B cell (primary cell): ENCODE measurements at regions of chr11 and their contacts with region 1.

Region 1: DNA sequence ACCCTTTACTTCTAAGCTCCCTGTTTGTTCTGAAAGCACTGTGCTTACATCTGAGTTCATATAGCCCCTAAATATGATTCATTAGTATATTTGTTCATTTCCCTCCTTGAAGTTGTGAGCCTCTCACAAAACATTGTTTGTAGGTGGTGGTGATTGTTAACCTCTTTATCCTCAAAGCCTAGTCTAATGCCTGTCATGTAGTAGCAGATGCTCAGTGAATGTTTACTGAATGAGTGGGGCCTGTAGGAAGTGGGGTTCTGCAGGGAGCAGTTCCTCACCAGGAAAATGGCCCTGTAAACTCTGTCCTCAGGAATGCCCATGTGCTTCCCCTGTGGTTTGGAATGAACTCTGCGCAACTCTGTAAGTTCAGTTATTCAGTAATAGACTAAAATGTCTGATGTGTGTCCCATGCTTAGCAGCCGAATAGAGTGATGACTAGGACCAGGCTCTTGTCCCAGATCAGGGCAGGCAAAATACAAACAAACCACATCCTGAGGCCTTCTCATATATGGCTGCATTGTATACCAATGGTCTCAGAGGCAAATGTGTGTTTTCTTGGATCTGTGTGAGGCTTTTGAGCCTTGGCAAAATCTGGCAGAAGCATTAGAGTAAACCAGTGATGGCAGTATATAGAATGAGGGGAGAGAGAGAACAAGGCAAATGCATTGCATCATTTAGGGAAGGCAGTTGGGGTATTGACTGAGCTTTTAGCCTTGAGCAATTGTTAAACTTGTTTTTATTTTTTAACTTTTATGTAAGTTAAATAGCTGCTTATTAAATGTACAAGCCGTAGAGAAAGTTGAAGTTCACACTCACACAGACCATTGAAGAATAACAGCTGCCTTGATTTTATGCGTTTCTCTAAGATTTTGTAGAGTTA is 91.4 kb upstream of the BIRC3 start:
- DNase-seq: no peak
- ATAC-seq: no peak
- H3K4me3 ChIP-seq: no peak overlapping the region
- H3K4me3 Mint-ChIP-seq: no peak overlapping the region
- H3K27ac ChIP-seq: no peak overlapping the region
- H3K27ac Mint-ChIP-seq: no peak overlapping the region
- H3K4me1 ChIP-seq: no peaks in the 10 kb centered on the region
- H3K4me1 Mint-ChIP-seq: no peaks in the 10 kb centered on the region
- H3K27me3 ChIP-seq: no peaks in the 10 kb centered on the region
- H3K27me3 Mint-ChIP-seq: peaks cover 19% of the 10 kb centered on the region
- CTCF ChIP-seq: no peak

Region 2: GRCh38 chr11:101914738-101915426 is 311.0 kb before region 1 on chr11 and contains the start of gene CEP126:
- CTCF ChIA-PET with region 1: no interaction called
- POLR2A ChIA-PET with region 1: interaction called, 14 read pairs
- intact Hi-C with region 1: no loop called
- DNase-seq: peak; percentile 98
- ATAC-seq: peak; percentile 90
- H3K4me3 ChIP-seq: peak within 1 kb of the TSS; percentile 53 to 88 (median 81)
- H3K4me3 Mint-ChIP-seq: peak within 1 kb of the TSS; percentile 96
- H3K27ac ChIP-seq: peak within 1 kb of the TSS; percentile 92 to 99
- H3K27ac Mint-ChIP-seq: peak within 1 kb of the TSS; percentile 97
- H3K4me1 ChIP-seq: peaks cover 18 to 21% of the 10 kb centered on the region in 2 donors
- H3K4me1 Mint-ChIP-seq: peaks cover 23% of the 10 kb centered on the region
- H3K27me3 ChIP-seq: no peaks in the 10 kb centered on the region
- H3K27me3 Mint-ChIP-seq: peaks cover 11% of the 10 kb centered on the region
- CTCF ChIP-seq: peak; percentile 23
- total RNA-seq, gene CEP126: 9.1 and 9.4 TPM in 2 replicates